Activated CD4-positive, alpha-beta memory T cell treated with anti-CD3 and anti-CD28 coated beads for 36 hours (primary cell): ENCODE measurements at regions of chr14 and their contacts with region 1.

Region 1: DNA sequence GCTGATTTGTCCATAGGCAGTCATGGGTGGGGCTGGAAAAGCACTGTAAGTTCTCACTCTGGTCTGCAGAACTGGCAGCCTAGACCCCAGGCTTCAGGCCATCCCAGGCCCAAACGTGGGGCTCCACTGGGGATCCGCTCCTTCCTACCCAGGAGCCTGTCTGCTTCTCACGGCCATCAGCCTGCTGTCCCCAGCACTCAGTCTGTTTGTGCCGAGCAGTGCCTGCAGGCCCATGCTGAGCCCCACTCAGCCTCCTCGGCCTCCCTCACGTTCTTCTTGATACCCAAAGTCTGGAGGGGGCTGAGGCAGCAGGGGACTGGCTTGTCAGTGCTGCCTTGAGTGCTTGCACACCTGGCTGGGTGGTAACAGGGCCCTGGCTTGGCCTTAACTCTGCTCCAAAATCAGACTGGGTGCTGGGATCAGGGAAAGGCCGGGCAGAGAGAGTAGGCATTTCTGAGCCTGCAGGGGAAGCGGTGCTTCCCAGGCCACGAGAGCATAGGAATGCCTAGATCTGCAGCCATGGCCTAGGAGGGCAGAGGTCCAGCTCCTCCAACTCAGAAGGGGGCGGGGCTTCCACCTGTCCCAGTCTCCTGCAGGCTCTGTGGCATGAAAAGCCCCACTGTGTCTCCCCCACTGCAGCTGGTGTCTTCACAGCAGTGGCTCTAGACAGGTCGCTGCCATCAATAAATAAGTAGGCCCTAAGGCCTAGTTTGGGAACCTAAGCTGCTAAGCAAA is 772.4 kb upstream of the FBXO33 start:
- DNase-seq: no peak
- H3K4me3 Mint-ChIP-seq: no peak overlapping the region
- H3K27ac Mint-ChIP-seq: no peak overlapping the region
- H3K4me1 Mint-ChIP-seq: no peaks in the 10 kb centered on the region
- H3K27me3 Mint-ChIP-seq: no peaks in the 10 kb centered on the region

Region 2: DNA sequence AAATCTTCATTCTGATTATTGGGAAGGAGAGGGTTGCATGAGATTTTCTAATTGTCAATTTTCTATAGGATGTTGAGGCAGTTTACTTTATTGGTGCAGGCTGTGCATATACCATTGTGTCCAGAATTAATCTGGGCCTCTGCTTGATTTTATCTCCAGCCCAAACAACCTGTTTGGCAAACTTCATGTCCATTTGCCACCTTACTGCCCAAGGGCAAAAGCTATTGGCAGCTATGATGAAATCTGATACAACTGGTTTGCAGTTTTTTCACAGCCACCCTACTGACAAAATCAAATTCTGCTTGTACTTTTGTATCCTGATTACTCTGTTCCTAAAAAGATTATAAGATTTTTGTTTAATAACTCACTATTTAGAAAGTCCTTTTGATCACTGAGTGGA is 16.8 kb after region 1 on chr14:
- CTCF ChIA-PET with region 1: no interaction called
- POLR2A ChIA-PET with region 1: no interaction called
- intact Hi-C with region 1: loop called (anchors 1 kb)
- DNase-seq: no peak
- H3K4me3 Mint-ChIP-seq: no peak overlapping the region
- H3K27ac Mint-ChIP-seq: no peak overlapping the region
- H3K4me1 Mint-ChIP-seq: no peaks in the 10 kb centered on the region
- H3K27me3 Mint-ChIP-seq: no peaks in the 10 kb centered on the region